PC-3 (cell line): ENCODE measurements at regions of chr11 and their contacts with region 1.

Region 1: DNA sequence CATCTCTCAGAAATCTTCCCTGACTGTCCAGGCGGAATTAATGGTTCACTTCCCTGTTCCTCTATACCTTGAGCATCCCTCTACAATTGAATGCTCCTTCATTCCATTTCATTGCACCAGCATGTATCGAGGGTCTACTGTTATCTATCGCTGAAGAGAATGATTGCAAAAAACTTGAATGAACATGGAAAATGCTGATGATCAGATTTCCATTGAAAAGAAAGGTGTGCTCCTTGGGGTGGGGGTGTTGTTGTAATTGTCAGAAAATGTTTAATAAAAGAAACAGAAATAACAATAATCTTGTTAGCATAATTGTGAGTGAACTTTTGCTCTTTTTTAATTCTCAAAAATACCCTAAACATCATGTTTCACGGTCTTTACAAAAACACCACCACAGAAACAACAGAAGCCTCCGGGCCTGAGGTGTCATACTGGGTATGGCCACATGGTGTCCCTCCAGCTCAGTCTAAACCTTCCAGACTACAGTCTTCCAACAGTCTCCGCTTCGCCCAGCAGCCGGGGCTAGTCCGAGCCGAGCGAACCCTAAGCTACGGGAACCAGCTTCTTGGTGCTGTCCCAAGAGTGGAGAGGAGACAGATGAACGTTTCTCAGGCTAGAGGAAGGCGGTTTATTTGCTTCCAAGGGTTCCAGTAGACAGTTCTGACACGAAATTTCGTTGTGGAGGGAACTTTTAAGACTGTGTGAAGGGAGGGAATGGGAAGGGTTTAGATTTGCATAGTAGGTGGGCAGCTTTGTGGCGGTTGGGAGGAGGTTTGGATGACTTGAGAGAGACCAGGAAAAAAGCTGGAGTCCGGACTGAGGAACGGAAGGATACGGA is 75.8 kb upstream of the ZBED5 start:
- DNase-seq: peak; percentile 92
- ATAC-seq: peak; percentile 66
- H3K4me3 ChIP-seq: peak overlapping the region; percentile 68
- H3K27ac ChIP-seq: peak overlapping the region; percentile 39
- H3K4me1 ChIP-seq: peaks cover 42% of the 10 kb centered on the region
- H3K27me3 ChIP-seq: no peaks in the 10 kb centered on the region
- CTCF ChIP-seq: peak; percentile 94

Region 2: GRCh38 chr11:10808553-10809372 is 124.9 kb before region 1 on chr11 and contains the start of gene EIF4G2:
- CTCF ChIA-PET with region 1: interaction called, 4 read pairs
- POLR2A ChIA-PET with region 1: interaction called, 9 read pairs
- intact Hi-C with region 1: loop called (anchors 2 kb)
- DNase-seq: peak; percentile 97
- ATAC-seq: peak; percentile 89
- H3K4me3 ChIP-seq: peak within 1 kb of the TSS; percentile 92
- H3K27ac ChIP-seq: peak within 1 kb of the TSS; percentile 95
- H3K4me1 ChIP-seq: peaks cover 41% of the 10 kb centered on the region
- H3K27me3 ChIP-seq: no peaks in the 10 kb centered on the region
- CTCF ChIP-seq: no peak
- total RNA-seq, gene EIF4G2: 999 and 1,007 TPM in 2 replicates

Region 3: GRCh38 chr11:10899121-10899830 is 34.4 kb before region 1 on chr11:
- CTCF ChIA-PET with region 1: interaction called, 6 read pairs
- POLR2A ChIA-PET with region 1: interaction called, 12 read pairs
- intact Hi-C with region 1: loop called (anchors 1 kb)
- DNase-seq: no peak
- ATAC-seq: peak; percentile 20; the same call in 1 of the 2 replicates
- H3K4me3 ChIP-seq: peak overlapping the region; percentile 18
- H3K27ac ChIP-seq: peak overlapping the region; percentile 99
- H3K4me1 ChIP-seq: peaks cover 45% of the 10 kb centered on the region
- H3K27me3 ChIP-seq: no peaks in the 10 kb centered on the region
- CTCF ChIP-seq: no peak

Region 4: GRCh38 chr11:11028017-11028692 is 94.5 kb after region 1 on chr11:
- CTCF ChIA-PET with region 1: interaction called, 21 read pairs
- POLR2A ChIA-PET with region 1: interaction called, 5 read pairs
- intact Hi-C with region 1: no loop called
- DNase-seq: peak; percentile 73
- ATAC-seq: peak; percentile 87
- H3K4me3 ChIP-seq: no peak overlapping the region
- H3K27ac ChIP-seq: no peak overlapping the region
- H3K4me1 ChIP-seq: peaks cover 17% of the 10 kb centered on the region
- H3K27me3 ChIP-seq: 0 out of 2 replicates have a peak, but pooled peaks cover 3% of the 10 kb centered on the region
- CTCF ChIP-seq: peak; percentile 93

Region 5: DNA sequence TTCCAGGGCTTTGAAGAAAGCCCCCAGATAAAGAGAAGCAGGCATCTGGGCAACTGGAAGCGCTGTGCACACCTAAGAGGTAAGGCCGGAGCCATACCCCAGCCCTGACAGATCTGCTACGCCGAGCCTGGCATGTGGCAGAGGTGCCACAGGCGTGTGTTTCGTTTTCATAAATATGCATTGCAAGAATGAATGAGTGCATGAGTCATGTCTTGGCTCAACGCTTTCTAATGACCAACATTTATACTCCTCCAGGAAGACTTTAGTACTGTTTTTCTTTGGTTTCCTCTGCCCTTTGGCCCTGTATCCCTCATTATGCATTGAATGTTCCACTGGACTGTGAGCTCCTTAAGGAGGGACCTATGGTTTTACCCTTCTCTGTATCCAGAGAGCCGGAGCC is 458.1 kb after region 1 on chr11:
- CTCF ChIA-PET with region 1: no interaction called
- POLR2A ChIA-PET with region 1: no interaction called
- intact Hi-C with region 1: no loop called
- DNase-seq: peak; percentile 88
- ATAC-seq: peak; percentile 95
- H3K4me3 ChIP-seq: no peak overlapping the region
- H3K27ac ChIP-seq: no peak overlapping the region
- H3K4me1 ChIP-seq: peaks cover 18% of the 10 kb centered on the region
- H3K27me3 ChIP-seq: no peaks in the 10 kb centered on the region
- CTCF ChIP-seq: no peak

Region 6: DNA sequence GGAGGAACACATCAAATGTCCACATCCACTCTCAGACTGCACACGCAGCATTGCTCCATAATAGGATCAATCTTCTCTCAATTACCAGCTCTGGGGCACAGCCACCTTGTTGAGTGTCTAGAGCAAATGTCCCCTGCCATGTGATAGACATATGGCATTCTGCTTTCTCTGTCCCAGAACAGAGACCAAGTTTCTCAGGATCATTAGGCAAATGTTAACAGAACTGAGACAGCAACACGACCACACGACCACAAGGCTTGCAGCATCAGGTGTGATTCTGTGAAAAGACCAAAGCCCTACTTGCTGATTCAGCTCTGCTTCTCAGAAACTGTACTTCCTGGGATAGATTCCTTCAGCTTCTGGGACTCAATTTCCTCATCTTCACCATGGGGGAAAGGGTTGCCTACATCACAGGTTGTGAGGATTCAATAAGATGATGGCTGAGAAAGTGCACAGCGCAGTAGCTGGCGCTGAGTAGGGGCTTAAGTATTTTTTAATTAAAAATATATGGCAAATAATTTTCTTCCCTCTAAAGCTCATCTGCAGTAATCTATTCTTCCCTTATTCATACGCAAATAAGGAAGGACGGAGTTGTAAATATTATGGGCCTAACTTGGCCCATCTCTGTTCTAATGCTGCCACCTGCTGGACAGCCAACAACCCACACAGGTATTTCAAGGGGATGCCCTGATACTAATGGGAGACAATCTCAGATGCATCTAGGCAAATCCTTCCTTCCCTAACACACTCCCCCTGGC is 853.8 kb after region 1 on chr11:
- CTCF ChIA-PET with region 1: no interaction called
- POLR2A ChIA-PET with region 1: no interaction called
- intact Hi-C with region 1: loop called (anchors 2 kb)
- DNase-seq: peak; percentile 85
- ATAC-seq: peak; percentile 97
- H3K4me3 ChIP-seq: no peak overlapping the region
- H3K27ac ChIP-seq: no peak overlapping the region
- H3K4me1 ChIP-seq: no peaks in the 10 kb centered on the region
- H3K27me3 ChIP-seq: no peaks in the 10 kb centered on the region
- CTCF ChIP-seq: peak; percentile 91